Activated CD4-positive, alpha-beta T cell treated with anti-CD3 and anti-CD28 coated beads, Interleukin-2, amount 10 ng/mL, durations not matched to agents 7 days and 5 days (primary cell): ENCODE measurements at regions of chr19 and their contacts with region 1.

Region 1: DNA sequence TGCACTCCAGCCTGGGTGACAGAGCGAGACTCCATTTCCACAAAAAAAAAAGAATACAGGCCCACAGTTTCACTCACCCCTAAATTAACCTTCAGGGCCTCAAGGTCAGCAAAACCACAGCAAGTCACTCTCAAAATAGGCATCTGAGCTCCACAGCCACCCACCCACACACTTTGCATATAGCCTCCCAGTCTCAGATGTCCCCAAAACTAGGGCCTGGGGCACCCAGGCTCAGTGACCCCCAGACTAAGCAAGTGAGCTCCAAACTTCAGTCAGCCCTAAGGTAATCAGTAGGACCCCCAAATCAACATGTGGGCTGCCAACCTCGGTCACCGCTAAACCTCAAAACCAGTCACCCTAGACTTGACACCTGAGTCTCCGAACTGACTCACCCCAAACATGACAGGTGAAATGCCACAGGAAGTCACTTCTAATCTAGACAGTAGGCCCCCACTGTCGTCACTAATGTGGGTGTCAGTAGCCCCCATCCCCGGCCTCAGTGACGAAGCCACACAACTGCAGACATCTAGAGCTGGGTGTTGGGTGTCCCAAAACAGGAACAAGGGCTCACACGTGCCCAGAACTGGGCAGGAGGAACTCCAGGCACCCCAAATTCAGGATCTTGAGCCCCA is 13.9 kb downstream of the RABAC1 start:
- DNase-seq: peak; percentile 79
- H3K4me3 Mint-ChIP-seq: no peak overlapping the region
- H3K27ac Mint-ChIP-seq: peak overlapping the region; percentile 81
- H3K4me1 Mint-ChIP-seq: peaks cover 41% of the 10 kb centered on the region
- H3K27me3 Mint-ChIP-seq: peaks cover 12% of the 10 kb centered on the region

Region 2: GRCh38 chr19:41959056-41960053 is 14.1 kb after region 1 on chr19 and contains the start of gene RABAC1:
- CTCF ChIA-PET with region 1: interaction called, 38 read pairs
- POLR2A ChIA-PET with region 1: no interaction called
- DNase-seq: peak; percentile 93
- H3K4me3 Mint-ChIP-seq: peak within 1 kb of the TSS; percentile 86
- H3K27ac Mint-ChIP-seq: peak within 1 kb of the TSS; percentile 91
- H3K4me1 Mint-ChIP-seq: peaks cover 20% of the 10 kb centered on the region
- H3K27me3 Mint-ChIP-seq: no peaks in the 10 kb centered on the region
- total RNA-seq, gene RABAC1: 67.4 to 74.0 TPM

Region 3: GRCh38 chr19:41969772-41970458 is 24.7 kb after region 1 on chr19:
- CTCF ChIA-PET with region 1: no interaction called
- POLR2A ChIA-PET with region 1: no interaction called
- DNase-seq: no peak
- H3K4me3 Mint-ChIP-seq: no peak overlapping the region
- H3K27ac Mint-ChIP-seq: no peak overlapping the region
- H3K4me1 Mint-ChIP-seq: no peaks in the 10 kb centered on the region
- H3K27me3 Mint-ChIP-seq: no peaks in the 10 kb centered on the region